Activated T-helper 1 cell treated with anti-CD3 and anti-CD28 coated beads, Interleukin-12 subunit alpha, Interleukin-12 subunit beta, Interleukin-2, Interleukin-4 antibody, amounts not matched to agents 30 ng/mL and 10 ng/mL and 1 ng/mL, durations not matched to agents 14 hours and 24 hours and 36 hours (primary cell): ENCODE measurements at regions of chr1 and their contacts with region 1.

Region 1: GRCh38 chr1:11735854-11736745 is at the start of gene AGTRAP:
- DNase-seq: peak; percentile 84
- H3K4me3 Mint-ChIP-seq: peak within 1 kb of the TSS; percentile 96
- H3K27ac Mint-ChIP-seq: peak within 1 kb of the TSS; percentile 88
- H3K4me1 Mint-ChIP-seq: peaks cover 67% of the 10 kb centered on the region
- H3K27me3 Mint-ChIP-seq: no peaks in the 10 kb centered on the region
- total RNA-seq, gene AGTRAP: 13.8 and 15.9 TPM in 2 replicates

Region 2: DNA sequence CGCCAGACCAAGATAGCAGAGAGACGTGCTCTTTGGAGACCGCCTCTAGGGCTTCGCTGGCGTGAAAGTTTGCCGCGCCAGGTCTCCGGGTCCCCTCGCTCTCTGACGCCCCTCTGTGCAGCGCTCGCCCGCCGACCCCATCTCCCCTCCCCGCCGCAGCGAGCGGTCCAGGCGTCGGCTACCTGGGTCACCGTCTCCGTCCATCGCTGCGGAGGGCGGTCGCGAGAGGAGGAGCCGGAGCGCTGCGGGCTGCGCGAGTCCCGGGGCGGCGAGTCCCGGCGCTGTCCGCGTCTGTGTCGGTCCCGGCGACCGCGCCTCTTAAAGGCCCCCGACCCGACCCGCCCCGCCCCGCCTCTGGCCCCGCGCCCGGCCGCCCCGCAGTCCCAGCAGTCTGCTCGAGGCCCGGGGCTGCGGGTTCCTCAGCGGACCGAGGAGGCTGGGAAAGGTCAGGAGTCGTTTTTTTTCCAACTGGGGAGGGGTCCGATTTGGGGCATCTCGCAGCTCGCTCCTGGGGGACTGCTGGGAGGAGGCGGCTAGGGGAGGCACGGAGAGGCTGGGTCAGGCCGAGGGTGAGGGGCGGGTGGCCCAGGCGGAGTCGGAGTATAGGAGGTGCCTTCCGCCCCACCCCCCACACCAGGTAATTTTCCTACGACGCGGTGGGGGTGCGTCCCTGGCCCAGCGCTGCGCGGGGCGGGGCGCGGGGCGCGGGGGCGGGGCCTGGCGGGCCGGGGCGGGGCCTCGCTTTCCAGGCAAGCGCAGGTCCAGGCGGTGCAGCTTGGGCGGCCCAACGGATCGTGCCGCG is 81.8 kb before region 1 on chr1 and contains the starts of genes FBXO2 and FBXO44:
- intact Hi-C with region 1: loop called (anchors 2 kb)
- DNase-seq: peak; percentile 41
- H3K4me3 Mint-ChIP-seq: peak within 1 kb of the TSS; percentile 77
- H3K27ac Mint-ChIP-seq: no peak within 1 kb of the TSS
- H3K4me1 Mint-ChIP-seq: peaks cover 23% of the 10 kb centered on the region
- H3K27me3 Mint-ChIP-seq: peaks cover 17% of the 10 kb centered on the region
- total RNA-seq, gene FBXO2: 0.60 and 0.93 TPM in 2 replicates
- total RNA-seq, gene FBXO44: 22.0 and 24.2 TPM in 2 replicates